ENCODE measurements at regions of chr1 and their contacts with region 1.

Region 1: GRCh38 chr1:1291548-1292441 is 11.6 kb downstream of the SCNN1D start:
- DNase-seq: peak; percentile 86
- H3K4me3 Mint-ChIP-seq: no peak overlapping the region
- H3K27ac Mint-ChIP-seq: no peak overlapping the region
- H3K4me1 Mint-ChIP-seq: no peaks in the 10 kb centered on the region
- H3K27me3 Mint-ChIP-seq: no peaks in the 10 kb centered on the region
- CTCF ChIP-seq: peak; percentile 77

Region 2: DNA sequence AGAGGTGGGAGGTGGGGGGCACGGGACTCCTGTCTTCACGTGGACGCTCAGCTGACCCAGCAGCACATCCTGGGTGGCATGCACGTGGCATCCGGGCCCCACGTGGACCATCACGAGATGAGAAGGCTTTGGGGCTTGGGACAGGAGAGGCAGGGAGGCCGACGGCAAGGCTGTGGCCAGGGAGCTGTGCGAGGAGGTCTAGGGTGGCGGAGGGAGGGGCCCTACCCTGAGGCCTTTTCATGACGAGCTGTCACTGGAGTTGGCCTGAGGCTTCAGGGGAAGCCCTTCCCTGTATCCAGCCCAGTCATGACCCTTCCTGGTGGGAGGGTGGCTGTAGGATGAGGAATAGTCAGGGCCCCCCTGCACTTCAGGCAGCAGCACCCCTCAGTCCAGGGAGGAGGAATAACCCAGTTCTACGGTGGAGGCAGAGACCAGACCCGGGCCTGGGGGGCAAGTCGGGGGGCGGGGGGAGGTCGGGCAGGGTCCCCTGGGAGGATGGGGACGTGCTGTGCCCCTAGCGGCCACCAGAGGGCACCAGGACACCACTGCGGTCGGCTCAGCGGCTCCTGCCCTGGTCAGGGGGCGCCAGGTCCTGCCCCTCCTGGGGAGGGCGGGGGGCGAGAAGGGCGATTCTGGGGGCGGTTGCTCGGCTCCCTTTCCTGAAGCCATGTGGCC is 307.9 kb before region 1 on chr1:
- CTCF ChIA-PET with region 1: interaction called, 4 read pairs
- POLR2A ChIA-PET with region 1: no interaction called
- intact Hi-C with region 1: loop called (anchors 10 kb)
- DNase-seq: no peak
- H3K4me3 Mint-ChIP-seq: no peak overlapping the region
- H3K27ac Mint-ChIP-seq: no peak overlapping the region
- H3K4me1 Mint-ChIP-seq: no peaks in the 10 kb centered on the region
- H3K27me3 Mint-ChIP-seq: peaks cover 28% of the 10 kb centered on the region
- CTCF ChIP-seq: peak; percentile 98

Region 3: GRCh38 chr1:1122078-1122811 is 169.6 kb before region 1 on chr1:
- CTCF ChIA-PET with region 1: interaction called, 77 read pairs
- POLR2A ChIA-PET with region 1: interaction called, 13 read pairs
- intact Hi-C with region 1: loop called (anchors 2 kb)
- DNase-seq: peak; percentile 73
- H3K4me3 Mint-ChIP-seq: no peak overlapping the region
- H3K27ac Mint-ChIP-seq: no peak overlapping the region
- H3K4me1 Mint-ChIP-seq: no peaks in the 10 kb centered on the region
- H3K27me3 Mint-ChIP-seq: no peaks in the 10 kb centered on the region
- CTCF ChIP-seq: peak; percentile 92

Region 4: DNA sequence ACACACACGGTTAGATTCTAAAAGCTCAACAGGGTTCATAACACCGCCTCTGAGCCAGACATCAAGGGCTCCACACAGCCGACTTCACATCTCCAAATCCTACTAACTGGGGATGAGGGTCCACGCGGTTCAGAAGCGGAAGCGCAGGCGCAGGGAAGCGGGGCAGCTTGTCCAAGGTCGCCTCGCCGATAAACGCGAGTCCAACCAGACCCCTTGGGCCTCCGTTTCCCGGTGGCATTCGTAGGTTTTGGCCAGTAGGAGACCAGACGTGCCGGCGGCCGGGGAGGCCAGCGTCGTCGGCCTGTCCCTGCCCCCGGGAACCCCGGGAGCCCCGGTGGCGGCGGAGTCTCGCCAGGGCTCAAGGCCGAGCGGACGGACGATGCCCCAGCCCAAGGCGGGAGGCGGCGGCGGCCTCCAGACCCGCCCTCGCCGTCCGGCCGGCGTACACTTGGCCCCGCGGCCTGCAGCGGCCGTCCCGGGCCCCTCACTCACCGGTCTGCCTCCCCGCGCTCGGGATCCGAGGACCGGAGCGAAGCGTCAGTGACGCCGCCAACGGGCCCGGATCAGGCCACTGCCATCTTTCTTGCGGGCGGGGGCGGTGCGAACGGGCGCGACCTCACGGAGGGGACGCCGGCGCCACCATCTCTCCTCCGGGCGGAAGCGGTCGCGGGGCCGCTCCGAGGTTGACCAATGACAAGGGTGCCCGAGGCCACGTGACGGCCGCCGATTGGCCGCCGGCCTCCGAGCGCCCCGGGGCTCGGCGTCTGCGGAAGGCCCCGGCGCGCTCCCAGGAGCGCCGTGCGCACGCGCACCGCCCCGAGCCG is 60.2 kb before region 1 on chr1 and contains the start of gene SDF4:
- CTCF ChIA-PET with region 1: interaction called, 3 read pairs
- POLR2A ChIA-PET with region 1: interaction called, 8 read pairs
- intact Hi-C with region 1: loop called (anchors 5 kb)
- DNase-seq: peak; percentile 95
- H3K4me3 Mint-ChIP-seq: peak within 1 kb of the TSS; percentile 88
- H3K27ac Mint-ChIP-seq: peak within 1 kb of the TSS; percentile 85
- H3K4me1 Mint-ChIP-seq: peaks cover 8% of the 10 kb centered on the region
- H3K27me3 Mint-ChIP-seq: no peaks in the 10 kb centered on the region
- CTCF ChIP-seq: no peak
- total RNA-seq, gene SDF4: 122 and 127 TPM in 2 replicates

Measured in MCF 10A (cell line).